ENCODE measurements at regions of chr5 and their contacts with region 1.

Region 1: GRCh38 chr5:170434966-170435605 is 45.9 kb upstream of the KCNMB1 start:
- DNase-seq: peak; percentile 85
- H3K4me3 Mint-ChIP-seq: no peak overlapping the region
- H3K27ac Mint-ChIP-seq: no peak overlapping the region
- H3K4me1 Mint-ChIP-seq: no peaks in the 10 kb centered on the region
- H3K27me3 Mint-ChIP-seq: no peaks in the 10 kb centered on the region

Region 2: GRCh38 chr5:170057301-170057700 is 377.8 kb before region 1 on chr5:
- intact Hi-C with region 1: no loop called
- DNase-seq: no peak
- H3K4me3 Mint-ChIP-seq: no peak overlapping the region
- H3K27ac Mint-ChIP-seq: no peak overlapping the region
- H3K4me1 Mint-ChIP-seq: no peaks in the 10 kb centered on the region
- H3K27me3 Mint-ChIP-seq: no peaks in the 10 kb centered on the region

Region 3: GRCh38 chr5:170226661-170227060 is 208.4 kb before region 1 on chr5:
- intact Hi-C with region 1: no loop called
- DNase-seq: no peak
- H3K4me3 Mint-ChIP-seq: no peak overlapping the region
- H3K27ac Mint-ChIP-seq: no peak overlapping the region
- H3K4me1 Mint-ChIP-seq: peaks cover 9% of the 10 kb centered on the region
- H3K27me3 Mint-ChIP-seq: no peaks in the 10 kb centered on the region

Region 4: DNA sequence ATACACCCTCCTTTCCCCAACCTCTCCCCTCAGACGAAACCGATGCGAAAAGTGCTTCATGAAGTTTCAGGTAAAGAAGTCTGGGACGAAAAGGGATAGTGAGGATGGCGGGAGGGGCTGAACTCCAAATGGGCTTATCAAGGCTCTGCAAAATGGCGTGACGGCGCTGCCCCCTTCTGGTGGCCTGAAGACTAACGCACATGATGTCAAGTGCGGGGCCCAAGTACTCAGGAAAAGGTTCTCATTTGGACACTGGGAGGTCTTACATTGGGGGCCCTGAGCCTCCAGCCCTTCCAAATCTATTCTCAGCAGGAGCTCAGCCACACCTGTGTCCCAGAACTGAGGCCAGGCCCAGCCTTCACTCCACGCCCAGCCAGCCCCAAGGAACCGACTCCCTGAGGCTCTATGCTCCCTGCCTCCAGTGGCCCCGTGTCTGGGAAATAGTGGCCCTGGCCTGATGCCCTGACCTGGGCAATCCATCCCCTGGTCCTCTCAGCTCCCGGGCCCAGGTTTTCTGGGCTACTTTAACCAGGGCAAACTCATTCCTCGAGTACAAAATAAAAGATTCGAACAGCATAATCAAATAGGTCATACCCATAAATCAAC is 188.6 kb after region 1 on chr5:
- intact Hi-C with region 1: loop called (anchors 1 kb)
- DNase-seq: peak; percentile 69
- H3K4me3 Mint-ChIP-seq: no peak overlapping the region
- H3K27ac Mint-ChIP-seq: no peak overlapping the region
- H3K4me1 Mint-ChIP-seq: no peaks in the 10 kb centered on the region
- H3K27me3 Mint-ChIP-seq: peaks cover 2% of the 10 kb centered on the region

Region 5: DNA sequence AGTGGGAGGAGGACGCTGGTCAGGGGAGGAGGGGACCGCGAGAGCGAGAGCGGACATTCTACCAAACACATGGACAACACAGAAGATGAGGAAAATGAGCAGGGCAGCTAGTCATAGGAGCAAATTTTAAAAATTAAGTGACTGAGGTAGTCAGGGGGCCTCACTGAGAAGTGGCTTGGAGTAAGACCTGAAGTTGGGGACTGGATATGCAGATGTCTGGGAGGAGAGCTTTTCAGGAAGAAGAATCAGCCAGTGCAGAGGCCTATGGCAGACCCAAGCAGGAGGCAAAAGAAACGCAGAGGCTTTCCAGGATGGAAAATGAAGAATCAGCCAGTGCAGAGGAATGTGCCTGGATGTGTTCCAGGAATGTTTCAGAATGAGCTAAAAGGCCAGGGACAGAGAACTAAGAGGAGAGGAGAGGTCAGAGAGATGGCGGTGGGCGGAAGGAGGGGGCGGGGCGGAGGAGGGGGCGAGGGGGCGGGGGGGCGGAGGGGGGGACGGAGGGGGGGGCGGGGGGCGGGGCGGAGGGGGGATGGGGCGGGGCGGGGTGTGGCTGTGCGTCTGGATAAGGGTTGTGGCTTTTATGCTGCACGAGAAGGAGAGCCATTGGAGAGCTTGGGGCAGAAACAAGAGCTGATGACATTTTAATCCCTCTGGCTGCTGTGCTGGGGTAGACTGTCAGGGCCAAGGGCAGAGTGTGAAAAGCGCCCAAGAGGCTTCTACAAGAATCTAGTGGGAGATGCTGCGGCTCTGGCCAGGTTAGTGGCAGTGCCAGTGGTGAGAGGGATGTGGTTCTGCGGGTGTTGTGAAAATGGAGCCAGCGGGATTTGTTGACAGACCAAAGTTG is 198.4 kb after region 1 on chr5:
- intact Hi-C with region 1: loop called (anchors 1 kb)
- DNase-seq: no peak
- H3K4me3 Mint-ChIP-seq: peak overlapping the region; percentile 37
- H3K27ac Mint-ChIP-seq: no peak overlapping the region
- H3K4me1 Mint-ChIP-seq: peaks cover 11% of the 10 kb centered on the region
- H3K27me3 Mint-ChIP-seq: peaks cover 16% of the 10 kb centered on the region

Measured in activated CD4-positive, alpha-beta T cell treated with anti-CD3 and anti-CD28 coated beads, Interleukin-2, amount 10 ng/mL, durations not matched to agents 24 days and 14 days (primary cell).